HepG2 (cell line): ENCODE measurements at regions of chr11 and their contacts with region 1.

Region 1: DNA sequence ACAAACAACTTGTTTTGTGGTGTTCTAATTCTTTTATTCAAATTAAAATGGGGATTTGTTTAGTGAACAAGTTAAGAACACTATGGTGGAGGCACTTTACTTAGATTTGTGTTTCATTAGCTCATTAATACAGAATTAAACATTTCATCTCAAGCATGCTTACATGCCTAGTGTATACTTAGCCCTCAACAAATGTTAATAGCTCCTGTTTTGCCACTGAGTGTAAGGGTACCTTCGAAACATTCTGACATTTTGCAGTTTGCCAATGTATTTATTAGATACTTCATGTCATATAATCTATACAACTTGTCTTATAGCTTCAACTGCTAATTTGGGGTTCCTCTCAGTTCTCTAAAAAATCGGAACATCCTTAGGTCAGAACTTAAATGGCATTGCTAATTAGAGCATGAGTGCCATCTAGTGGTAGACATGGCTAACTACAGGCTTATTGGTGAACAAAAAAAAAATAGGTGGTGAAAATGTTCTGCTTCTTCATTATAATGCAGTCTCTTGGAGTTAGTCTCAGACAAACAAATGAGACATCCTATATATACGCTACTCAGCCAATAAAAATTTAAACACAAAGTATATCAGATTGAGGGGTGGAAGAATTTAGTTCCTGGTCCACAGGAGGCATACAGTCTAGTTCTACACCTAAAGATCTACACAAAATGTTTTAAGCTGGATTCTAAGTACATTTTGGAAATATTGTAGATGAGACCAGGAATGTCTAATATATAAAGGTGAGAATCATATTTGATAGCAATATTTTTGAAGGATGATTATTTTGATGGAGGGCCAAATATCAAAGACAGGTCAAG is 4.9 kb upstream of the CNTN5 start:
- DNase-seq: peak; percentile 40
- ATAC-seq: no peak
- H3K4me3 ChIP-seq: no peak overlapping the region
- H3K27ac ChIP-seq: no peak overlapping the region
- H3K4me1 ChIP-seq: peaks cover 7% of the 10 kb centered on the region; the same call in 1 of the 2 replicates
- H3K27me3 ChIP-seq: peaks cover 0 to 11% of the 10 kb centered on the region in 2 experiments; a peak in 1 of 5 replicates
- CTCF ChIP-seq: peak; percentile 79
- EP300 ChIP-seq: no peak
- POLR2A ChIP-seq: no peak
- RAD21 ChIP-seq: peak; percentile 47

Region 2: DNA sequence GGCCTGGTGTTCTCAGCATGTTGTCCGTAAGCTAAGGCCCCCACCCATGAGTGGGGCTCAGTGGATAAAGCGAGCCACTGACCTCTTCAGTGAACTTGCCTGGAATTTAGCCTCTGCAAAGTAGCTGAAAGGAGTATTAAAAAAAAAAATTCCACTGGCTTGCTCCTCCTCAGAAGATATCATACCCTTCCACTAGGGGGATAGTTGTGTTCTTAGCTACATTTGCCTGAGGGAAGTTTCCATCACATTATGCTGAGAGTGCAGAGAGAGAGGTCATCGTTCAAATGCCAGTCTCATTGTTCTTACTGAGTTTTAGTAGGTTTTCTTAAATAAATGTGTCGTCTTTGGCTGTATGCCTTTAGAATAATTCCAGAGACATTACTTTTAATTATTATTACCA is 1746.3 kb before region 1 on chr11:
- CTCF ChIA-PET with region 1: no interaction called
- POLR2A ChIA-PET with region 1: no interaction called
- in situ Hi-C with region 1: no loop called
- intact Hi-C with region 1: loop called (anchors 2 kb)
- DNase-seq: peak; percentile 13
- ATAC-seq: peak; percentile 82
- H3K4me3 ChIP-seq: no peak overlapping the region
- H3K27ac ChIP-seq: no peak overlapping the region
- H3K4me1 ChIP-seq: no peaks in the 10 kb centered on the region
- H3K27me3 ChIP-seq: no peaks in the 10 kb centered on the region
- CTCF ChIP-seq: 0 out of 2 replicates have a peak, but pooled peaks have one; percentile 3
- EP300 ChIP-seq: no peak
- POLR2A ChIP-seq: no peak
- RAD21 ChIP-seq: no peak

Region 3: GRCh38 chr11:97454988-97455387 is 1560.9 kb before region 1 on chr11:
- CTCF ChIA-PET with region 1: no interaction called
- POLR2A ChIA-PET with region 1: no interaction called
- in situ Hi-C with region 1: loop called (anchors 25 kb)
- intact Hi-C with region 1: loop called (anchors 5 kb)
- DNase-seq: peak; percentile 3
- ATAC-seq: no peak
- H3K4me3 ChIP-seq: no peak overlapping the region
- H3K27ac ChIP-seq: no peak overlapping the region
- H3K4me1 ChIP-seq: no peaks in the 10 kb centered on the region
- H3K27me3 ChIP-seq: no peaks in the 10 kb centered on the region
- CTCF ChIP-seq: 0 out of 2 replicates have a peak, but pooled peaks have one; percentile 19
- EP300 ChIP-seq: no peak
- POLR2A ChIP-seq: no peak
- RAD21 ChIP-seq: no peak

Region 4: GRCh38 chr11:98455500-98456307 is 560.1 kb before region 1 on chr11:
- CTCF ChIA-PET with region 1: no interaction called
- POLR2A ChIA-PET with region 1: no interaction called
- in situ Hi-C with region 1: loop called (anchors 25 kb)
- intact Hi-C with region 1: loop called (anchors 2 kb)
- DNase-seq: peak; percentile 10
- ATAC-seq: peak; percentile 57; the same call in 2 of the 3 replicates
- H3K4me3 ChIP-seq: no peak overlapping the region
- H3K27ac ChIP-seq: no peak overlapping the region
- H3K4me1 ChIP-seq: no peaks in the 10 kb centered on the region
- H3K27me3 ChIP-seq: no peaks in the 10 kb centered on the region; a peak in 1 of 5 replicates
- CTCF ChIP-seq: 0 out of 2 replicates have a peak, but pooled peaks have one; percentile 9
- EP300 ChIP-seq: no peak
- POLR2A ChIP-seq: no peak
- RAD21 ChIP-seq: no peak

Region 5: GRCh38 chr11:98545544-98546175 is 470.2 kb before region 1 on chr11:
- CTCF ChIA-PET with region 1: no interaction called
- POLR2A ChIA-PET with region 1: no interaction called
- in situ Hi-C with region 1: no loop called
- intact Hi-C with region 1: no loop called
- DNase-seq: no peak
- ATAC-seq: no peak
- H3K4me3 ChIP-seq: no peak overlapping the region
- H3K27ac ChIP-seq: no peak overlapping the region
- H3K4me1 ChIP-seq: no peaks in the 10 kb centered on the region
- H3K27me3 ChIP-seq: no peaks in the 10 kb centered on the region
- CTCF ChIP-seq: no peak
- EP300 ChIP-seq: no peak
- POLR2A ChIP-seq: no peak
- RAD21 ChIP-seq: no peak

Region 6: DNA sequence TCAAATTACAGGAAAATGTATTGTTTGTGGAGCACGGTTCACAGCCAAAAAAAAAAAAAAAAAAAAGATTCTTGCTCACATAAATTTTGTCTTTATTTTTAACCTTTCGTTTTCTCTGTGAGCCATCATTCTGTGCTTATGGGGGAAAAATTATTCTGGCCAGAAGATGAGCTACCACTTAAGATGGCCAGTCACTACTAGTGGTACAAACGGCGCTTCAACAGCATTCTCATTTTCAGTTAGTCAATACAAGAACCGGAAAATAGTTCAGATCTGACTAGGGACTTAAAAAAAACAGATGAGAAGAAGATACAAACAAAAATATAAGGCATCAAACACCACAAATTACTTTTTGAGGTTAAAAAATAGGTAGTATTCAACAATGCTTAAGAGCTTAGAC is 153.7 kb before region 1 on chr11:
- CTCF ChIA-PET with region 1: no interaction called
- POLR2A ChIA-PET with region 1: no interaction called
- in situ Hi-C with region 1: no loop called
- intact Hi-C with region 1: no loop called
- DNase-seq: no peak
- ATAC-seq: no peak
- H3K4me3 ChIP-seq: no peak overlapping the region
- H3K27ac ChIP-seq: no peak overlapping the region
- H3K4me1 ChIP-seq: no peaks in the 10 kb centered on the region
- H3K27me3 ChIP-seq: no peaks in the 10 kb centered on the region
- CTCF ChIP-seq: no peak
- EP300 ChIP-seq: no peak
- POLR2A ChIP-seq: no peak
- RAD21 ChIP-seq: no peak

Region 7: DNA sequence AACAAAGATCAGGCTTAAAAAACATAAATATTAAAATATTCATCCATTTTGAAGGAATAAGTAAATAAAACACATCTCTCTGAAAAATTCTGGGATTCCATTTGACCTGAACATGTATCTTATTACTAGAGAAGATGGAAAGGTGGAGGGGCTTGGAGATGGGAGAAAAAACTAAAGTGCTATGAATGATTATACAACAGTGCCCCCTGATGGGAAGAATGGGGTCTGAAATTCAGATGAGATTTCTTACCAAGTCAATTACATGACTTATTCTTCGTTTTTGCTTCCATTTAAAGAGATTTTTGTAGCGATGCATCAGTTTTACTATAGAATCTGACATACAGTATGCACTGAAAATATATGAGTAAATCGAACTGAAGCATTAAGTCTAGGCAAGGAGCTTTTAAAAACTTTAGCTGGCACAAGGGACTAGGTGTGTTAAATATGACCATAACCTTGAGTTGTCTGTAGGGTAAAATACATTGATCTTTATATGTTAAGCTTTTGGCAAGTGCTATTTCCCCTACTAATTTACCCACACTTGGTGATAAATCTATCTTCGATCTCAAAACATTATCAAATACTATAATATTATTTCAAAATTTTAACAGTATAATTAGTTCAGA is 723.7 kb after region 1 on chr11:
- CTCF ChIA-PET with region 1: no interaction called
- POLR2A ChIA-PET with region 1: no interaction called
- in situ Hi-C with region 1: no loop called
- intact Hi-C with region 1: loop called (anchors 2 kb)
- DNase-seq: peak; percentile 17
- ATAC-seq: no peak; the same call in 2 of the 3 replicates
- H3K4me3 ChIP-seq: no peak overlapping the region
- H3K27ac ChIP-seq: no peak overlapping the region
- H3K4me1 ChIP-seq: no peaks in the 10 kb centered on the region
- H3K27me3 ChIP-seq: no peaks in the 10 kb centered on the region
- CTCF ChIP-seq: peak; percentile 59
- EP300 ChIP-seq: no peak
- POLR2A ChIP-seq: no peak
- RAD21 ChIP-seq: no peak